MCF 10A (cell line): ENCODE measurements at regions of chr1 and their contacts with region 1.

Region 1: GRCh38 chr1:209248649-209249279 is 334.8 kb upstream of the CAMK1G start:
- DNase-seq: peak; percentile 91
- H3K4me3 Mint-ChIP-seq: no peak overlapping the region
- H3K27ac Mint-ChIP-seq: no peak overlapping the region
- H3K4me1 Mint-ChIP-seq: peaks cover 5% of the 10 kb centered on the region
- H3K27me3 Mint-ChIP-seq: no peaks in the 10 kb centered on the region
- CTCF ChIP-seq: peak; percentile 99

Region 2: DNA sequence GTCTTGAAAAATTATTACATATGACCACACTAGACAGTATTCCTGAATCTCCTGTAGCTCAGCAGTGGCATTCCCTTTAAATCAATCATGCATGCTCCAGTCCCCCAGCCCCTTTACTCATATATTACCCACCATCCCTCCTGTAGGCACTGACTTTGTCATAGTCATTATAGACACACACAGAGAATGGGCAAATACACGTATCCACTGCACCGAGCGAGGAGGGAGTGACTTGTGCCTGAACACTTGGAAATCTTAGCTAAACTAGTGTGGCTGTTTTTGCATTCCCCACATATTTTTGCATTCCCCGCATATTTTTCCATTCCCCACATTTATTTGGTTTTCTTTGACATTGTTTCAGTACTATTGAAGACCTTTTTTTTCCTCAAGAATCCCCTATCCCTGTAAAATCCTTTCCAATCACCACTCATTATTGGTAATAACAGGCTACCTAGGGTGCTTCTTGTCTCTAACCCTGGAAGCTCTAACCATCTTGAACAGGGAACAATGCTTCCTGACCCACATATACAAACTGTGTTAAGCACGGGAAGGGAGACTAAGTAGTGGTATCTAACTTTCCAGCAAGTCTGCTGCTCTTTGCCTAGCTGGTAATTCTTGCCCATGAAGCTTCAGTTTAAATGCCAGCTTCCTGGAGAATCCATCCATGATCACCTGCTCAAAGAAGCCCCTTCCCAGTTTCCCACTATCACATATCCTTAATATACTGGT is 199.7 kb before region 1 on chr1:
- CTCF ChIA-PET with region 1: no interaction called
- POLR2A ChIA-PET with region 1: no interaction called
- intact Hi-C with region 1: no loop called
- DNase-seq: no peak
- H3K4me3 Mint-ChIP-seq: no peak overlapping the region
- H3K27ac Mint-ChIP-seq: no peak overlapping the region
- H3K4me1 Mint-ChIP-seq: peaks cover 21% of the 10 kb centered on the region
- H3K27me3 Mint-ChIP-seq: no peaks in the 10 kb centered on the region
- CTCF ChIP-seq: no peak

Region 3: GRCh38 chr1:209076688-209077087 is 172.1 kb before region 1 on chr1:
- CTCF ChIA-PET with region 1: interaction called, 5 read pairs
- POLR2A ChIA-PET with region 1: no interaction called
- intact Hi-C with region 1: loop called (anchors 1 kb)
- DNase-seq: peak; percentile 84
- H3K4me3 Mint-ChIP-seq: no peak overlapping the region
- H3K27ac Mint-ChIP-seq: no peak overlapping the region
- H3K4me1 Mint-ChIP-seq: peaks cover 15% of the 10 kb centered on the region
- H3K27me3 Mint-ChIP-seq: no peaks in the 10 kb centered on the region
- CTCF ChIP-seq: peak; percentile 68

Region 4: DNA sequence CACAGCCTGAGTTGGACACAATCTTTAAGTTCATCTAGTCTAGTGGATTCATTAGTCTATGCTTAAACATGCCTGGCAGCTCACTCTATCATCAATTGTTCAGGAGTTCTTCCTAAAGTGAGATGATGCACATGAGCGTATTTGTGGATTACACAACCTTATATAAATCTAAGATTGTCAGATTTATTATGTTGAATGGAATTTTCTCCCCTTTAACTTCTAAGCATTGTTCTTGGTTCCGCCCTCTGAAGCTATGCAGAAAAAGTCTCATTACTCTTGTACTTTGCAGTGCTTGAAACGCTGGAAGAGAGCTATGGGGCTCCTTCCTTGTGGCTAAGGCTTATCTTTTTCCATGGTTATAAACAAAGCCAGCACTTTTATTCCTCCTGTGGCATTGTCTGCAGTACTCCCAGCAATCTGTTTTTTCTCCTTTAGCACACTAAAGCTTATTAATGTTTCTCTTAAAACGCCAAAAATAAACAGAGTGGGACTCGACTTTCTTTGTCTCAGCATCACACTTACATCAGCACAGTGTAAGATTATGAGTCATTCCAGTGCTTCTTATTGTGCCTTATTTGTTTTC is 17.9 kb after region 1 on chr1:
- CTCF ChIA-PET with region 1: interaction called, 74 read pairs
- POLR2A ChIA-PET with region 1: interaction called, 4 read pairs
- intact Hi-C with region 1: no loop called
- DNase-seq: peak; percentile 55
- H3K4me3 Mint-ChIP-seq: peak overlapping the region; percentile 7
- H3K27ac Mint-ChIP-seq: no peak overlapping the region
- H3K4me1 Mint-ChIP-seq: peaks cover 10% of the 10 kb centered on the region
- H3K27me3 Mint-ChIP-seq: no peaks in the 10 kb centered on the region
- CTCF ChIP-seq: no peak

Region 5: DNA sequence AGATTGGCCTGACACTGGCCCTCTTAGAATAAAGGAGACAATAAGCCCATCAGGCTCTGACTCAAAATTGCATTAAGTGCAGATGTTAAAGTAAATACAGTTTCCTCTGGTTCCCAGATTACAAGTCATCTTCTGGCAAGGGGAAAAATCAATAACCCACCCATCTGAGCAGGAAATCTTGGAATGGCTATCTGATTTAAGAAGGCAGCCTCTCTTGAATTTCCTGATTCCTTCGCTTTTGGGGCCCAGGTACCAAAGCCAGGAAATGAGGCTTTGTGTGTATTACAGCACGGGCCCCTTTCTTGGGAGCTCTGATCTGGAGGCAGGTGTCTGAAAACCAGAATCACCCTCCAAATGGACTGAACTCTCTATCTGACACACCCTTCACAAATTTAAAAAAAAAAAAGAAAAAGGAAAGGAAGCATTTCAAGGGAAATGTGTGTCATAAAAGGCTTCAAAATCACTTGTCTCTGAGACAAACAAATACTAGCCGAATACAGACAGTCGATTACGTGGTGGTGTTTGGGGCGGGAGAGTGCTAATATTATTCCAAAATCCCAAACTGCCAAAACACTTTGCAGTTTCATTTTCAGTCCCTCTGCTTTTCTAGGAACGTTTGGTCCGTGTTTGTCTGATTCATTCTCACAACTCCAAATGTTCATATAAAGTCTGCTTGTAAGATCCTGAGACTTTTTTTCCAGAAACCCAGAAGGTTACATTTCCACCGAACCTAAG is 93.8 kb after region 1 on chr1:
- CTCF ChIA-PET with region 1: interaction called, 220 read pairs
- POLR2A ChIA-PET with region 1: interaction called, 3 read pairs
- intact Hi-C with region 1: no loop called
- DNase-seq: no peak
- H3K4me3 Mint-ChIP-seq: no peak overlapping the region
- H3K27ac Mint-ChIP-seq: no peak overlapping the region
- H3K4me1 Mint-ChIP-seq: no peaks in the 10 kb centered on the region
- H3K27me3 Mint-ChIP-seq: no peaks in the 10 kb centered on the region
- CTCF ChIP-seq: no peak

Region 6: DNA sequence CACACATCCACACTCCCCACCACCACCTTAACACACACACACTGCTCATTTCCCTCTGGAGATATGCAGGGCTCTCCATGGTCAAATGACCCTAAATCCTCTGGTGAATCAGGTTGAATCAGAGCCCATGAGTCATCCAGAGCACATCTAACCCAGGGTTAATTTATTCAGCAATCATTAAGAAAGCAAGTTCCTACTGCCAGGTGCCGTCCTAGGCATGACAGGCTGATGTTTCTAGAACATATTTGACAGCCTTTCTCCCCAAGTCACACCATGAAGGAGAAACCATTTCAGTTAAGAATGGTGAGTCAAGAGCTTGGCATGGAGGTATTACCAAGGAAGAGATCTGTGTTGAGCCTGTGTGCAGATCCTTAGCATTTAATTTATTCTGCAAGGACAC is 140.5 kb after region 1 on chr1:
- CTCF ChIA-PET with region 1: interaction called, 12 read pairs
- POLR2A ChIA-PET with region 1: interaction called, 4 read pairs
- intact Hi-C with region 1: no loop called
- DNase-seq: peak; percentile 99
- H3K4me3 Mint-ChIP-seq: peak overlapping the region; percentile 22
- H3K27ac Mint-ChIP-seq: peak overlapping the region; percentile 79
- H3K4me1 Mint-ChIP-seq: peaks cover 45% of the 10 kb centered on the region
- H3K27me3 Mint-ChIP-seq: no peaks in the 10 kb centered on the region
- CTCF ChIP-seq: no peak

Region 7: GRCh38 chr1:209443971-209444651 is 195.3 kb after region 1 on chr1:
- CTCF ChIA-PET with region 1: interaction called, 74 read pairs
- POLR2A ChIA-PET with region 1: interaction called, 3 read pairs
- intact Hi-C with region 1: no loop called
- DNase-seq: peak; percentile 54
- H3K4me3 Mint-ChIP-seq: no peak overlapping the region
- H3K27ac Mint-ChIP-seq: peak overlapping the region; percentile 17
- H3K4me1 Mint-ChIP-seq: peaks cover 24% of the 10 kb centered on the region
- H3K27me3 Mint-ChIP-seq: no peaks in the 10 kb centered on the region
- CTCF ChIP-seq: no peak

Region 8: GRCh38 chr1:209805875-209806760 is 557.4 kb after region 1 on chr1 and contains the start of gene IRF6:
- CTCF ChIA-PET with region 1: no interaction called
- POLR2A ChIA-PET with region 1: no interaction called
- intact Hi-C with region 1: no loop called
- DNase-seq: peak; percentile 99
- H3K4me3 Mint-ChIP-seq: peak within 1 kb of the TSS; percentile 90
- H3K27ac Mint-ChIP-seq: peak within 1 kb of the TSS; percentile 92
- H3K4me1 Mint-ChIP-seq: peaks cover 74% of the 10 kb centered on the region
- H3K27me3 Mint-ChIP-seq: no peaks in the 10 kb centered on the region
- CTCF ChIP-seq: no peak
- total RNA-seq, gene IRF6: 87.8 and 106 TPM in 2 replicates